ENCODE measurements at regions of chr9 and their contacts with region 1.

Region 1: DNA sequence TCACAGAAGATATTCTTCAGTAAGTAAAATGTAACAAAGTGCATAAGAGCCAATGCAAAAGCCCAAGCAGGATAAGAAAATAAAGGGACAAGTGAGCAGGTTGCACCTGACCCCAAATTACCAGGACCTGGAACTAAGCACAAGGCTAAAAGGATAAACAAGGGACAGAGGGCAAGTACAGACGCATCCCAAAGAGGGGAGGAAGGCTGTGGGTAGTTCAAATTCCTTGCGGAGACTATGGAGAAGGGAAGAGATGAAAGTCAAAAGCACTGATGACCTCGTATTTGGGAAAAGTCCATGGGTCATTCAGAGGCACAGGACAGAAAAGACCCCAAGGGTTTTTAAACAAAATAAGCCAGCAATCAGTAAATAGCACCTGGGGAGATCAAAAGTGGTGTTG is 11.8 kb downstream of the ELAVL2 start:
- DNase-seq: no peak
- ATAC-seq: no peak
- H3K4me3 ChIP-seq: no peak overlapping the region
- H3K4me3 Mint-ChIP-seq: no peak overlapping the region
- H3K27ac ChIP-seq: no peak overlapping the region
- H3K27ac Mint-ChIP-seq: no peak overlapping the region
- H3K4me1 ChIP-seq: no peaks in the 10 kb centered on the region
- H3K4me1 Mint-ChIP-seq: no peaks in the 10 kb centered on the region
- H3K27me3 ChIP-seq: no peaks in the 10 kb centered on the region
- H3K27me3 Mint-ChIP-seq: peaks cover 13% of the 10 kb centered on the region
- CTCF ChIP-seq: no peak

Region 2: DNA sequence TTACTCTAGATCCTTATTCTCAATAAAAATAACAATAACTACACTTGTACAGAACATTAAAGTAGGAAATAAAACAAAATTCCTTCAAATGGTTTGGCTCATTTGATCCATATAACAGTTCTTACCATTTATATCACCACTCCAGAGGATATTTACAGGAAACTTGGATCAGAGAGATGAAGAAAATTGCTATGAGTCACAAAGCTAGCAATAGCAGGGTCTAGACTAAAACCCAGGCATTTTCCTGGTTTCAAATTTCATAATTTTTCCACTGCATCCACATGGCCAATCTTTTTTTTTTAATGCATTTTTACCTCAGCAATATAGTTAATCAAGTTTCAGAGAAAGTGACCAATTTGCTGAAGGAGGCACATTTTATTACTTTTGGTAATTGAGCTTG is 287.4 kb before region 1 on chr9:
- CTCF ChIA-PET with region 1: no interaction called
- POLR2A ChIA-PET with region 1: no interaction called
- intact Hi-C with region 1: no loop called
- DNase-seq: no peak
- ATAC-seq: no peak
- H3K4me3 ChIP-seq: no peak overlapping the region
- H3K4me3 Mint-ChIP-seq: no peak overlapping the region
- H3K27ac ChIP-seq: no peak overlapping the region
- H3K27ac Mint-ChIP-seq: no peak overlapping the region
- H3K4me1 ChIP-seq: no peaks in the 10 kb centered on the region
- H3K4me1 Mint-ChIP-seq: no peaks in the 10 kb centered on the region
- H3K27me3 ChIP-seq: no peaks in the 10 kb centered on the region
- H3K27me3 Mint-ChIP-seq: no peaks in the 10 kb centered on the region
- CTCF ChIP-seq: no peak

Region 3: DNA sequence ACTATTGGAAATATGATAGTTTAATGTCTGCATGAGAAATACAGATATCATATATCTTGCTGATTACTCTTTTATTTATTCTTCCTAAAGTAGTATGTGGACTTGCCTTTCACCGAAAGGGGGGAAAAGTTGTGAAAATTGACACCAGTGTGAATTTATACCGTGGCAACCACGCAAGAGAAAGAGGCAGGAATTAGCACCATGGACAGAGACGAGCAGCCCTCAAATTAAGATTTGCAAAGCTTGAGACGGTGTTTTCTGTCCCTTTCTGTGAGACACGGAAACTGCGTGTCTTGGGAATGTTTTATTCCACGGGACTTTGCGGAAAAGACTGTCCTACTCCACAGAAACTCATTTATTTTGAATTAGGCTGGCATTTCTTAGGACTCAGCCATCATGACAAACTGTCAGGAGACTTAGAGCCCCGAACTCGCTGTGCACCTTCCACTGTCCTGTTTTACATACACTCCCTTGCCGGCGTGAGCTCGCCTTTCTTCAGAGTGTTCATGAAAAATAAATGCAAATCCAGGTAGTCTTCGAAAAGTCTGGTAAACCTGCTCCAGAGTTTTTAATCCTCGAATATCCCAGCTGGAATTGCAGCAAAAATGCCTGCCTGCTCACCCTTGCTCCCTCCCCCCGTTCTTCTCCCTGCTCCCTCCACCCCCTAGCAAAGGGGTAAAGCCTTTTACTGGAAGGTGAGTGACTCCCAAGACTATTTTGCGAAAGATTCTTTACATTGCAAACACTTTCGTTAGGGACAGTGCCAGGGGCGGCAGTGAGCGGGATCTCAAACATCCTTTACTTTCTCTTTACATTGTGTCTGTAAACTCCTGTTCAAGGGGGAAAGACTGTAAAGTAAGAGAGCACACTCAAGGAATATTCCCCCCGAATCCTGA is 15.6 kb after region 1 on chr9:
- CTCF ChIA-PET with region 1: no interaction called
- POLR2A ChIA-PET with region 1: no interaction called
- intact Hi-C with region 1: loop called in 1 of 2 experiments (anchors 2 kb)
- DNase-seq: no peak
- ATAC-seq: no peak
- H3K4me3 ChIP-seq: no peak overlapping the region
- H3K4me3 Mint-ChIP-seq: no peak overlapping the region
- H3K27ac ChIP-seq: no peak overlapping the region
- H3K27ac Mint-ChIP-seq: no peak overlapping the region
- H3K4me1 ChIP-seq: peaks cover 6% of the 10 kb centered on the region
- H3K4me1 Mint-ChIP-seq: no peaks in the 10 kb centered on the region
- H3K27me3 ChIP-seq: no peaks in the 10 kb centered on the region
- H3K27me3 Mint-ChIP-seq: peaks cover 36% of the 10 kb centered on the region
- CTCF ChIP-seq: no peak